ENCODE measurements at regions of chr10 and their contacts with region 1.

Region 1: DNA sequence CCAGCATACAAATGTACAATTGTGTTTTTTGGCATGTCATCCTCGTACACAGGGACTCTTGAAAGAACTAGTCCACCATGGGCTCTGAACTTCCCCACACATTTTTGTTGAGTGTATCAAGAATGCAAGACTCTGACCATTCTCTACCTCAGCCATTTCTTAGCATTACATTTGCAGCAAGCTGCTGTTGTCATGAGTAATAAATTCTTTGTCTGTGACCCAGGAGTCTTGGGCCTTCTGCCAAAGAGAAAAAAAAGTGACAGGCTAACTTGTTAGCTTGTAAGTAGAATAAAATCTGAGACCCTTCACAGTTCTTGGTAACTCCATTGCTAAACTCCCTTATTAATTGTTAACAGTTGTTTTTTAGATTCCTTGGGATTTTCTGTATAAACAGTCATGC is 542.3 kb upstream of the MBL2 start:
- DNase-seq: peak; percentile 95
- H3K4me3 ChIP-seq: no peak overlapping the region
- H3K27ac ChIP-seq: no peak overlapping the region
- H3K4me1 ChIP-seq: no peaks in the 10 kb centered on the region
- H3K27me3 ChIP-seq: no peaks in the 10 kb centered on the region
- CTCF ChIP-seq: no peak
- POLR2A ChIP-seq: no peak

Region 2: GRCh38 chr10:52883996-52884871 is 430.6 kb before region 1 on chr10:
- CTCF ChIA-PET with region 1: no interaction called
- POLR2A ChIA-PET with region 1: no interaction called
- dilution Hi-C with region 1: no loop called
- intact Hi-C with region 1: loop called (anchors 2 kb)
- DNase-seq: peak; percentile 67
- H3K4me3 ChIP-seq: no peak overlapping the region
- H3K27ac ChIP-seq: no peak overlapping the region
- H3K4me1 ChIP-seq: peaks cover 17% of the 10 kb centered on the region
- H3K27me3 ChIP-seq: peaks cover 0 to 6% of the 10 kb centered on the region in 2 experiments
- CTCF ChIP-seq: peak; percentile 70 to 72
- POLR2A ChIP-seq: no peak

Region 3: GRCh38 chr10:53325066-53325465 is 10.2 kb after region 1 on chr10:
- CTCF ChIA-PET with region 1: interaction called, 13 read pairs
- POLR2A ChIA-PET with region 1: no interaction called
- dilution Hi-C with region 1: no loop called
- intact Hi-C with region 1: no loop called
- DNase-seq: no peak
- H3K4me3 ChIP-seq: no peak overlapping the region
- H3K27ac ChIP-seq: no peak overlapping the region
- H3K4me1 ChIP-seq: no peaks in the 10 kb centered on the region
- H3K27me3 ChIP-seq: no peaks in the 10 kb centered on the region
- CTCF ChIP-seq: no peak
- POLR2A ChIP-seq: no peak

Region 4: DNA sequence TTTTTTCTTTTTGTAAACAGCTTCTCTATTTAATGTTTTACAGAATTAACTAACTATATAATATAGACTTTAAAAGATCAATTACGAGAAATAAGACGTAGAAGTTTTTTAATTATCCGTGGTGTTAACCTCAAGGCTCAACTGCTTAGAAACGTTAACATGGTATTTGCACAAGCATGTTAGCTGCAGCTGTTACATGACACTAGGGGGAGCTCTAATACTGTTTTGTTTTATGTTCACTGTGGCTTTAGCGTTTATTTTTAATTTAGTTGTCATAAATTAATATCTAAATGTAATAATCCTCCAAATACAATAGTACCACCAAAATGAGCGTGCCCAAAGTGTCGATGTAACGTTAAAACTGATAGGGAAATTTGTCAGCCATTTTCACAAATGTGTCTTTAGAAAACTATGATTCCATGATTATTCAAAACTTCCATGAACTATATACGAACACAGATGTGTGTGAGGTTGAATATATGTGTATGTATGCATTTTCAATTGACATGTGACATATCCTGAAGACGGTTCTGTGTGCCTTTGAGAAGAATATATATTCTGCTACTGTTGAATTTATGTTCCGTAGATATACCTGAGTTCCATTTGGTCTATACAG is 286.5 kb after region 1 on chr10:
- CTCF ChIA-PET with region 1: interaction called, 11 read pairs
- POLR2A ChIA-PET with region 1: no interaction called
- dilution Hi-C with region 1: no loop called
- intact Hi-C with region 1: no loop called
- DNase-seq: peak; percentile 52
- H3K4me3 ChIP-seq: no peak overlapping the region
- H3K27ac ChIP-seq: no peak overlapping the region
- H3K4me1 ChIP-seq: no peaks in the 10 kb centered on the region
- H3K27me3 ChIP-seq: peaks cover 2 to 9% of the 10 kb centered on the region in 2 experiments
- CTCF ChIP-seq: peak; percentile 67 to 75
- POLR2A ChIP-seq: no peak

Region 5: DNA sequence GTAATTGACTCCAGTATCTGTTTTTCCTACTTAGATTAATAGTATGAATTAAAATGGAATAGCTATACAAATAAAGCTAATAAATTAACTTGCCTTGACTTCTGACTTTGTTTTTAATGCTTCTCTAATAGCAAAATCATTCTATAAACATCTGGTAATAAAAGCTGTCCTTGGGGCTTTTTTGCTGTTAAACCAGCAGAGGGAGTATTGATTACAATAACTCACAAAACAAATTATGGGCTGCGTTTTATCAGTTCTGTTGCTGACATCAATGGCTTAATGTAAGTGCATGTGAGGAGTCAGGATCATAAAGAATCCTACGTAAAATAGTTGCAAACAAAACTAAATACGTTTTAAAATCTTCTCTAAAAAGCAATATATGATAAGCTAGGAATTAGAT is 818.3 kb after region 1 on chr10:
- CTCF ChIA-PET with region 1: interaction called, 10 read pairs
- POLR2A ChIA-PET with region 1: no interaction called
- dilution Hi-C with region 1: no loop called
- intact Hi-C with region 1: no loop called
- DNase-seq: peak; percentile 22
- H3K4me3 ChIP-seq: no peak overlapping the region
- H3K27ac ChIP-seq: no peak overlapping the region
- H3K4me1 ChIP-seq: no peaks in the 10 kb centered on the region
- H3K27me3 ChIP-seq: no peaks in the 10 kb centered on the region
- CTCF ChIP-seq: peak; percentile 22 to 35
- POLR2A ChIP-seq: no peak

Region 6: GRCh38 chr10:55263327-55263726 is 1948.5 kb after region 1 on chr10:
- CTCF ChIA-PET with region 1: interaction called, 12 read pairs
- POLR2A ChIA-PET with region 1: no interaction called
- dilution Hi-C with region 1: no loop called
- intact Hi-C with region 1: no loop called
- DNase-seq: no peak
- H3K4me3 ChIP-seq: no peak overlapping the region
- H3K27ac ChIP-seq: no peak overlapping the region
- H3K4me1 ChIP-seq: no peaks in the 10 kb centered on the region
- H3K27me3 ChIP-seq: peaks cover 0 to 2% of the 10 kb centered on the region in 2 experiments
- CTCF ChIP-seq: no peak
- POLR2A ChIP-seq: no peak

Measured in endothelial cell of umbilical vein (primary cell).